ENCODE measurements at regions of chr9 and their contacts with region 1.

Region 1: GRCh38 chr9:105694190-105694847 is at the start of gene TMEM38B:
- DNase-seq: peak; percentile 85
- ATAC-seq: peak; percentile 80
- H3K4me3 Mint-ChIP-seq: peak within 1 kb of the TSS; percentile 89
- H3K27ac Mint-ChIP-seq: peak within 1 kb of the TSS; percentile 84
- H3K4me1 Mint-ChIP-seq: peaks cover 23% of the 10 kb centered on the region
- H3K27me3 Mint-ChIP-seq: peaks cover 19% of the 10 kb centered on the region
- CTCF ChIP-seq: no peak
- total RNA-seq, gene TMEM38B: 10.9 and 12.7 TPM in 2 replicates

Region 2: GRCh38 chr9:104093647-104094533 is 1600.4 kb before region 1 on chr9 and contains the start of gene SMC2:
- CTCF ChIA-PET with region 1: no interaction called
- POLR2A ChIA-PET with region 1: no interaction called
- intact Hi-C with region 1: loop called (anchors 1 kb)
- DNase-seq: peak; percentile 90
- ATAC-seq: peak; percentile 97
- H3K4me3 Mint-ChIP-seq: peak within 1 kb of the TSS; percentile 99
- H3K27ac Mint-ChIP-seq: peak within 1 kb of the TSS; percentile 99
- H3K4me1 Mint-ChIP-seq: peaks cover 31% of the 10 kb centered on the region
- H3K27me3 Mint-ChIP-seq: no peaks in the 10 kb centered on the region
- CTCF ChIP-seq: no peak
- total RNA-seq, gene SMC2: 12.5 and 13.5 TPM in 2 replicates

Region 3: GRCh38 chr9:104927912-104928740 is 766.2 kb before region 1 on chr9 and contains the start of gene ABCA1:
- CTCF ChIA-PET with region 1: no interaction called
- POLR2A ChIA-PET with region 1: no interaction called
- intact Hi-C with region 1: loop called (anchors 5 kb)
- DNase-seq: peak; percentile 64
- ATAC-seq: peak; percentile 73
- H3K4me3 Mint-ChIP-seq: peak within 1 kb of the TSS; percentile 93
- H3K27ac Mint-ChIP-seq: peak within 1 kb of the TSS; percentile 68
- H3K4me1 Mint-ChIP-seq: peaks cover 42% of the 10 kb centered on the region
- H3K27me3 Mint-ChIP-seq: no peaks in the 10 kb centered on the region
- CTCF ChIP-seq: no peak
- total RNA-seq, gene ABCA1: 1.7 and 2.3 TPM in 2 replicates

Region 4: GRCh38 chr9:105457560-105458294 is 236.6 kb before region 1 on chr9:
- CTCF ChIA-PET with region 1: no interaction called
- POLR2A ChIA-PET with region 1: no interaction called
- intact Hi-C with region 1: no loop called
- DNase-seq: no peak
- ATAC-seq: no peak
- H3K4me3 Mint-ChIP-seq: no peak overlapping the region
- H3K27ac Mint-ChIP-seq: no peak overlapping the region
- H3K4me1 Mint-ChIP-seq: no peaks in the 10 kb centered on the region
- H3K27me3 Mint-ChIP-seq: no peaks in the 10 kb centered on the region
- CTCF ChIP-seq: no peak

Region 5: GRCh38 chr9:105500108-105500766 is 194.1 kb before region 1 on chr9:
- CTCF ChIA-PET with region 1: no interaction called
- POLR2A ChIA-PET with region 1: interaction called, 7 read pairs
- intact Hi-C with region 1: loop called (anchors 2 kb)
- DNase-seq: peak; percentile 34
- ATAC-seq: peak; percentile 88
- H3K4me3 Mint-ChIP-seq: peak overlapping the region; percentile 78
- H3K27ac Mint-ChIP-seq: peak overlapping the region; percentile 96
- H3K4me1 Mint-ChIP-seq: peaks cover 26% of the 10 kb centered on the region
- H3K27me3 Mint-ChIP-seq: no peaks in the 10 kb centered on the region
- CTCF ChIP-seq: no peak

Region 6: GRCh38 chr9:105662193-105663075 is 31.9 kb before region 1 on chr9 and contains the start of gene TAL2:
- CTCF ChIA-PET with region 1: interaction called, 3 read pairs
- POLR2A ChIA-PET with region 1: interaction called, 7 read pairs
- intact Hi-C with region 1: loop called (anchors 1 kb)
- DNase-seq: no peak
- ATAC-seq: peak; percentile 84
- H3K4me3 Mint-ChIP-seq: peak within 1 kb of the TSS; percentile 44
- H3K27ac Mint-ChIP-seq: peak within 1 kb of the TSS; percentile 84
- H3K4me1 Mint-ChIP-seq: peaks cover 27% of the 10 kb centered on the region
- H3K27me3 Mint-ChIP-seq: peaks cover 10% of the 10 kb centered on the region
- CTCF ChIP-seq: no peak
- total RNA-seq, gene TAL2: 0.38 TPM in 1 of 2 replicates, not detected in the other

Region 7: DNA sequence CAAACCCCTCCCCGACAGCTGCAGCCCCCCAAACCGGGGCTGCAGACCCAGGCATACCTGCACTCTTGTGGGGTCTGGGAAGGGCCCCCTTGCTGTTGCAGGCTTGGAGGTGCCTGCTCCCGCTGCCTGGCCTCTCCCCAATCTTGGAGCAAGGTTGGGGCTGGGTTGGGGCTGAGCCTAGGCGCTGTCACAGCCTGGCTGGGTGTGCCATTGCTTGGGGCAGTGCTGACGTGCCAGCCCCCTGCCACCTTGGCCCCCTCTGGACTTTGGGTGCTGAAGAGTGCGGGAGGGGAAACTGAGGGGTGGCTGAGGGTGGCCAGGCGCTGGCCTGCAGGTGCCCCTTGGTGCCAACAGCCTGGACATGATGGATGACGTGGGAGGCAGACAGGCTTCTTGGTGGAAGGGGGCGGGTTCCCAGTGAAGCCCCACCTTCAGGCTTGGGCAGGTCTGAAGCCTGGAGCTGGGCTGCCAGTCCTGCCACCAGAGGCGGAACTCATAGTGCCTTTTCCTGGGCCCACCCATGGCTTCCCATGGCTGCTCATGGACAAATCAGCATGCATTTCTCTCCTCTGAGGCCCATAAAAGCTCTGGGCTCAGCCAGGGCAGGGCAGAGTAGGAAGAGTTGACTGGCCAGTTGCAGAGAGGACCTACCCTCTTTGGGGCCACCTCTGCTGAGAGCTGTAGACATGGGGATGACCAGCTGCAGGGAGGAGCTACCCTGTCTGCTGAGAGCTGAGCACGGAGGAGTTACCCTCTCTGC is 19.1 kb after region 1 on chr9:
- CTCF ChIA-PET with region 1: interaction called, 8 read pairs
- POLR2A ChIA-PET with region 1: interaction called, 3 read pairs
- intact Hi-C with region 1: loop called (anchors 1 kb)
- DNase-seq: no peak
- ATAC-seq: no peak
- H3K4me3 Mint-ChIP-seq: no peak overlapping the region
- H3K27ac Mint-ChIP-seq: no peak overlapping the region
- H3K4me1 Mint-ChIP-seq: peaks cover 2% of the 10 kb centered on the region
- H3K27me3 Mint-ChIP-seq: no peaks in the 10 kb centered on the region
- CTCF ChIP-seq: no peak

Region 8: DNA sequence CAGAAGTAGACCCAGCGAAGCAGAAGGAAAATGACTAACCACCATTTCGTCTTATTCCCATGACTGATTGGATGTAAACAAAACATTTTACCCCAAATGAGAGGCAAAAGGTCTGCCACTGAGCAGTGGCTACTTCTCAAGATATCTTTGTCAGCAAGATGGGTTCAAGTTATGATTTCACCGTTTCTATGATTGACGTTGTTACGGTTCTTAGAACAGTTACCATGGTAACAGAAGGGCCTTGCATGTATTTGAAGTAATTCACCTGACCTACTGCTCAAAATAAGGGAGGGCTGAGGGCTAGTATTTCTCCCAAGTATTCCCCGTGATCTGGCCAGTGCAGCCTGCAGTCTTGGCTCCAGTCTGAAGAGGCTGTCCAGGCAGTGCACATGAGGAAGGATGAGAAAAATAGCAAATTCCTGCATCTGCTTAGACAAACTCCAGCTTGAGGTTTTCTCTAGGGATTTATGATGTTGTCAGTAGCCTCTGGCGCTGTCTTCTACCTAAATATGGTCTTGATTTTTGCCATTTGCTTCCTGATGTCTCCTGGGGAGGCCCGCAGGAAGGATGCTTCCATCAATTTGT is 372.7 kb after region 1 on chr9:
- CTCF ChIA-PET with region 1: no interaction called
- POLR2A ChIA-PET with region 1: no interaction called
- intact Hi-C with region 1: no loop called
- DNase-seq: no peak
- ATAC-seq: no peak
- H3K4me3 Mint-ChIP-seq: no peak overlapping the region
- H3K27ac Mint-ChIP-seq: no peak overlapping the region
- H3K4me1 Mint-ChIP-seq: no peaks in the 10 kb centered on the region
- H3K27me3 Mint-ChIP-seq: no peaks in the 10 kb centered on the region
- CTCF ChIP-seq: no peak

Region 9: GRCh38 chr9:106653213-106653612 is 958.9 kb after region 1 on chr9:
- CTCF ChIA-PET with region 1: no interaction called
- POLR2A ChIA-PET with region 1: no interaction called
- intact Hi-C with region 1: no loop called
- DNase-seq: no peak
- ATAC-seq: no peak
- H3K4me3 Mint-ChIP-seq: no peak overlapping the region
- H3K27ac Mint-ChIP-seq: no peak overlapping the region
- H3K4me1 Mint-ChIP-seq: no peaks in the 10 kb centered on the region
- H3K27me3 Mint-ChIP-seq: no peaks in the 10 kb centered on the region
- CTCF ChIP-seq: no peak

Region 10: GRCh38 chr9:107465467-107466451 is 1771.4 kb after region 1 on chr9:
- CTCF ChIA-PET with region 1: no interaction called
- POLR2A ChIA-PET with region 1: no interaction called
- intact Hi-C with region 1: no loop called
- DNase-seq: peak; percentile 50
- ATAC-seq: peak; percentile 90
- H3K4me3 Mint-ChIP-seq: peak overlapping the region; percentile 67
- H3K27ac Mint-ChIP-seq: no peak overlapping the region
- H3K4me1 Mint-ChIP-seq: peaks cover 8% of the 10 kb centered on the region
- H3K27me3 Mint-ChIP-seq: peaks cover 30% of the 10 kb centered on the region
- CTCF ChIP-seq: no peak